Tibial artery (tissue), 4 donors: ENCODE measurements at regions of chr10 and their contacts with region 1.

Region 1: GRCh38 chr10:86710987-86711512 is 42.7 kb downstream of the LDB3 start:
- DNase-seq: peak; percentile 83 to 95
- H3K4me3 ChIP-seq: peak overlapping the region; percentile 68 to 86
- H3K27ac ChIP-seq: peak overlapping the region; percentile 96 to 98
- H3K4me1 ChIP-seq: peaks cover 0 to 18% (median 11%) of the 10 kb centered on the region in 4 donors
- H3K27me3 ChIP-seq: no peaks in the 10 kb centered on the region
- CTCF ChIP-seq: peak; percentile 90 to 97

Region 2: DNA sequence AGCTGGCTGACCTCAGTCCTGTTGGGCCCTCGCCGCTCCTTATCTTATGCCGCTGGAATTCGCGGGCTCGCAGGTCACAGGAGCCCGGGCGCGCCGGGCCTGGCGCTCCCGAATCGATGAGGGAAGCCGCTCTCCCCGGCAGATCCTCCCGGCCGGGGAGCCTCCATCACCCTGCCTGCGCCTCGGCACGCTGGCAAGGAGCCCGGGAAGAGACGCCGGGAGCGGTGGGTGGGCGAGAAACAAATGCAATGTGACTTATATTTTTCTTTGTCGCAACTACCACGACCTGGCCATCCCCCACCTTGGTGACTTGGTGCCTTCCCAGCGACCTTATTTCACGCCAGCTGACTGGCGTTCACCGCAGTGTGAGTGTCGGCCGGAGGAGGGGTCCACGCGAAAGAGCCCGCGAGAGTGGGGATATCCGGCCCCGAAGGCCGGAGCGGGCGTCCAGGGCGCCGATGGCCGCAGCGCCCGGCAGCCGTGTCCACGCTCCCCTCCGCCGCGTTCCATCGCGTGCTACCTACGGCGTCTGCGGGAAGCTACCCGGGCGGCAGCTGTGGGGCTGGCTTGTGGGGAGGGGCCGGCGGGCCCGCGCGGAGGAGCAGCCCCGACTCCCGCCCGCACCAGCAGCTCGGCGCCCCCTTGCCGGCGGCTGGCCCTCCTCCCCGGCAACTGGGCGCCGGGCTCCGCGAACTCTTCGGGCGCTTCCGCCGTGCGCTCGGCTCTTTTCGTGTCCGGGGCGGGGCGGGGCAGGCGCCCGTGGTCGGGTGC is 44.9 kb after region 1 on chr10:
- intact Hi-C with region 1: loop called (anchors 1 kb)
- DNase-seq: peak; percentile 81 to 93
- H3K4me3 ChIP-seq: peak overlapping the region; percentile 58 to 83
- H3K27ac ChIP-seq: peak overlapping the region; percentile 98 to 99
- H3K4me1 ChIP-seq: peaks cover 0 to 45% (median 20%) of the 10 kb centered on the region in 4 donors
- H3K27me3 ChIP-seq: no peaks in the 10 kb centered on the region
- CTCF ChIP-seq: no peak

Region 3: GRCh38 chr10:86899670-86900276 is 188.7 kb after region 1 on chr10:
- intact Hi-C with region 1: loop called (anchors 2 kb)
- DNase-seq: peak; percentile 69 to 74
- H3K4me3 ChIP-seq: no peak overlapping the region
- H3K27ac ChIP-seq: peak overlapping the region; percentile 29 to 39
- H3K4me1 ChIP-seq: peaks cover 0 to 30% (median 15%) of the 10 kb centered on the region in 4 donors
- H3K27me3 ChIP-seq: no peaks in the 10 kb centered on the region
- CTCF ChIP-seq: peak; percentile 67 to 75